OCI-LY7 (cell line): ENCODE measurements at regions of chr11 and their contacts with region 1.

Region 1: DNA sequence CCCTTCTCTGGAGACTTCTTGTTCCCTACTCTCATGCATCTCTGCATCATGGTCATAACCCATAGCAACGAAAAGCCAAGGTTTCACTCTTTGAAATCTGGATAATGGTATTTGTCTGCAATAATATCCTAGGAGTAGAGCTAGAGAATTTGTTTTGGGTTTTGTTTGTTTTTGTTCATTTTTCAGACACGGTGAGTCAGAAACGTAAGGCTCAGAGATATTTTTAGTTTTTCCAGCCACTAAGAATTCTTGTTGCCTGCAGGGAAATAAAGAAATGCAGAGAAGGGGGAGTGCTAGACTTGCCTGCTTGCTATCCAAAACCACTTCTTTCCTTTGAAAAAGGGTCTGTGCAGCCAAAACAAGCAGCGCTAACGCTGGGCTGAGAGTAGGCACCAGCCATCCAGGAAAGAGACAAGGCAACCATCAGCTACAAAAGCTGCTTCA is 26.0 kb downstream of the POU2AF3 start:
- DNase-seq: no peak
- H3K4me3 ChIP-seq: no peak overlapping the region
- H3K27ac ChIP-seq: no peak overlapping the region
- H3K4me1 ChIP-seq: no peaks in the 10 kb centered on the region
- CTCF ChIP-seq: no peak

Region 2: GRCh38 chr11:111334532-111335502 is 10.5 kb after region 1 on chr11:
- CTCF ChIA-PET with region 1: no interaction called
- POLR2A ChIA-PET with region 1: interaction called, 14 read pairs
- intact Hi-C with region 1: no loop called
- DNase-seq: no peak
- H3K4me3 ChIP-seq: no peak overlapping the region
- H3K27ac ChIP-seq: no peak overlapping the region
- H3K4me1 ChIP-seq: peaks cover 2% of the 10 kb centered on the region
- CTCF ChIP-seq: no peak

Region 3: GRCh38 chr11:111359223-111360149 is 35.2 kb after region 1 on chr11:
- CTCF ChIA-PET with region 1: no interaction called
- POLR2A ChIA-PET with region 1: no interaction called
- intact Hi-C with region 1: no loop called
- DNase-seq: peak; percentile 59
- H3K4me3 ChIP-seq: no peak overlapping the region
- H3K27ac ChIP-seq: peak overlapping the region; percentile 40
- H3K4me1 ChIP-seq: peaks cover 58% of the 10 kb centered on the region
- CTCF ChIP-seq: peak; percentile 70